IMR-90 (cell line): ENCODE measurements at regions of chr4 and their contacts with region 1.

Region 1: DNA sequence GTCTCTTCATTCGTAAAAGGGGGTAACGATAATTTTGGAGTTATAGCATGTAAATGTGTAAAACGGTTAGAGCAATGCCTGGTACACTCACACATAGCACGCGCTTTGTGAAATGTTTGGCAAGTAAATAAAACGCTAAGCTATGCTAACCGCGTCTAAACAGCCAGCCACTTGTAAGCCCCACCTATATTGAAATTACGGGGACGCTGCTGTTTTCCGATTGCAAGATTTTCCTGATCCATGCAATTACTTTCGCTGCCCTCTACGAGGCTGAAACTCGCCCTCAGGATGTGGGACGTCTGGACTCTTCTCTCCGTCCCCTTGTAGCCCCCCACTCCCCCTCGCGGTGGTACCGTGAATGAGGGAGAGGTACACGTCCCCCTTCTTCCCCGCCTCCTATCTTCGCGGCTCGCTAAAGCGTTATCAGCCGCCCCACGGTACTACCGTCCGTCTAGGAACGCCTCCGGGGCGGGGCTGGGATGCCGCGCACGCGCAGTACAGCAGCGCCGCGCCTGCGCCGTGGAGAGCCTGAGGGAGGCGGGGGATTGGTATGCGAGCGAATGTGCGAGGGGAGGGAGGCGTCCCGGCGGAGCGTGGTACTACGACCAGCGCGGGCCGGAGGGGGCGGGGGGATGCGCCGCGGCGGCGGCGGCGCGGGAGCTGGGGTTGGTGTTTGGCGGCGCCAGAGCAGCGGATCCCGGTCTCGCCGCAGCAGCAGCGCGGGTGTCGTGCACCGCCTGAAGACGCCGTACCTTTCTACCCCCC is at the start of gene STIM2:
- DNase-seq: peak; percentile 96
- ATAC-seq: peak; percentile 78
- H3K4me3 ChIP-seq: peak within 1 kb of the TSS; percentile 62
- H3K27ac ChIP-seq: peak within 1 kb of the TSS; percentile 62
- H3K4me1 ChIP-seq: peaks cover 8% of the 10 kb centered on the region; the same call in 1 of the 2 replicates
- H3K27me3 ChIP-seq: no peaks in the 10 kb centered on the region
- CTCF ChIP-seq: peak; percentile 44
- POLR2A ChIP-seq: peak; percentile 35; the same call in 1 of the 2 replicates
- RAD21 ChIP-seq: no peak
- total RNA-seq, gene STIM2: 24.2 and 27.6 TPM in 2 replicates

Region 2: GRCh38 chr4:26140150-26140898 is 720.0 kb before region 1 on chr4:
- CTCF ChIA-PET with region 1: no interaction called
- POLR2A ChIA-PET with region 1: no interaction called
- dilution Hi-C with region 1: no loop called
- in situ Hi-C with region 1: no loop called
- intact Hi-C with region 1: no loop called
- DNase-seq: peak; percentile 59
- ATAC-seq: peak; percentile 16; the same call in 1 of the 2 replicates
- H3K4me3 ChIP-seq: no peak overlapping the region
- H3K27ac ChIP-seq: peak overlapping the region; percentile 74; the same call in 1 of the 2 replicates
- H3K4me1 ChIP-seq: peaks cover 27% of the 10 kb centered on the region
- H3K27me3 ChIP-seq: no peaks in the 10 kb centered on the region
- CTCF ChIP-seq: no peak
- POLR2A ChIP-seq: no peak
- RAD21 ChIP-seq: no peak

Region 3: DNA sequence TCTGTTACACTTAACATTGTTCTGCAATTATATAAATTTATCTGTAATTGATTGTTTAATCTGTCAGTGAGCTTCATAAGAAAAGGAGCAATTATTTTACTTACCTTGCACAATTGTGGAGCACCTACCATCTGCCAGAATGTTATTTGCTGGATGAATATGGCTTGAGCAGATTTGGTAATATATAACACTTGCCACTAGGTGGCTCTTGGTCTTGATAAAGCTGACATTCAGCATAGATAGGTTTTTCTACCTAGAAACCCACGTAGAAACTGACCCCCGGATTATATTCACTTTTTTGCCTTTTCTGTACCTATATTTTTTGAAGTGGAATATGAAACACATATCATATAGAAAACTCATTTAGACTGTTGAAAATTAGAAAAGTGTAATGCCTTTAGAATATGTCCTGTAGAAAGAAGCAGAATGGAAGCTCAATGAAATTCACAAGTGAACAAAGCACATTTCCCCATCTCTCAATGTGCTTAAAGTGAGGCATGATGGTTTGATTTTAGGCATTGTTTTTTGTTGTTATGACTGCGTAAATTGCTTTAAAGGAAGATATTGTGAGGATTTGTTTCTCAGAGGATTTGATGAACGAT is 530.1 kb before region 1 on chr4:
- CTCF ChIA-PET with region 1: no interaction called
- POLR2A ChIA-PET with region 1: no interaction called
- dilution Hi-C with region 1: no loop called
- in situ Hi-C with region 1: loop called (anchors 25 kb)
- intact Hi-C with region 1: loop called (anchors 10 kb)
- DNase-seq: peak; percentile 68
- ATAC-seq: no peak
- H3K4me3 ChIP-seq: no peak overlapping the region
- H3K27ac ChIP-seq: no peak overlapping the region
- H3K4me1 ChIP-seq: peaks cover 13% of the 10 kb centered on the region
- H3K27me3 ChIP-seq: no peaks in the 10 kb centered on the region
- CTCF ChIP-seq: peak; percentile 61
- POLR2A ChIP-seq: no peak
- RAD21 ChIP-seq: peak; percentile 67

Region 4: DNA sequence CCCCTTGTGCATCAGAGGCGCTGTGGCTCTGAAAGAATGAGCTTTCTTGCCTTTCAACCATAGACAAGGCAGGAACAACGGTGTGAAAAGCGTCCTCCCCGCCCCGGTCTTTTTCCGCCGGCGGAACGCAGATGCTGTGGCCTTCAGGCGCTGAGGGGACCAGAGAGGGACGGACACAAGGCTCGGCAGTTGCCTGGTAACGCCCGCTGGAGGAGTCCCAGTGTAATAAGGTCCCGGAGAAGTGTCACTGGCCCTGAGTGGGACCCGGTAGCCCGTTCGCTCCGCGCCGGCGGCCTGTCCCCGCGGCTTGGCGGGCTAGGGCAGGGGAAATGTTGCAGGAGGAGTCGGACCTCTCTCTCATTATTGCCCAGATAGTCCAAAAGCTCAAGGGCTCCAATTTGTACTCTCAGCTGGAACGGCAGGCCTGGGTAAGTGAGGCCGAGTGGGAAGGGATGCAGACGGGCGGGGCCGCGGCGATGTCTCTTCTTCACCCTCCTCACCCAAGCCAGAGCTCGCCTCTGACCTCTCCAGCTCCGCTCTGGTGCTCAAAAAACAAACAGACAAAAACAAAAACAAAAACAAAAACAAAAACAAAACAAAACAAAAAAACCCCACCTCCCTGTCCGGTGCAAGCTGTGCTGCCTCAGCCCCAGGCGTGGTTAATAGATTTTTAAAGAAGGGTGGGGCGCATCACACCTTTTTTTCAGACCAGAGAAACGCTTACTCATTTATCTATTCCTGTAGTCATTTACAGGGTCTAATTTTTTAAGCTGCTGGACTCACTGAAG is 276.3 kb before region 1 on chr4 and contains the start of gene TBC1D19:
- CTCF ChIA-PET with region 1: no interaction called
- POLR2A ChIA-PET with region 1: no interaction called
- dilution Hi-C with region 1: no loop called
- in situ Hi-C with region 1: no loop called
- intact Hi-C with region 1: loop called (anchors 5 kb)
- DNase-seq: peak; percentile 85
- ATAC-seq: peak; percentile 99
- H3K4me3 ChIP-seq: peak within 1 kb of the TSS; percentile 76
- H3K27ac ChIP-seq: peak within 1 kb of the TSS; percentile 69
- H3K4me1 ChIP-seq: no peaks in the 10 kb centered on the region
- H3K27me3 ChIP-seq: no peaks in the 10 kb centered on the region
- CTCF ChIP-seq: peak; percentile 4; the same call in 1 of the 2 replicates
- POLR2A ChIP-seq: no peak
- RAD21 ChIP-seq: peak; percentile 33
- total RNA-seq, gene TBC1D19: 17.6 and 31.4 TPM in 2 replicates

Region 5: GRCh38 chr4:26931966-26932365 is 71.6 kb after region 1 on chr4:
- CTCF ChIA-PET with region 1: no interaction called
- POLR2A ChIA-PET with region 1: no interaction called
- dilution Hi-C with region 1: no loop called
- in situ Hi-C with region 1: no loop called
- intact Hi-C with region 1: no loop called
- DNase-seq: no peak
- ATAC-seq: no peak
- H3K4me3 ChIP-seq: no peak overlapping the region
- H3K27ac ChIP-seq: no peak overlapping the region
- H3K4me1 ChIP-seq: peaks cover 4% of the 10 kb centered on the region; the same call in 1 of the 2 replicates
- H3K27me3 ChIP-seq: no peaks in the 10 kb centered on the region
- CTCF ChIP-seq: no peak
- POLR2A ChIP-seq: no peak
- RAD21 ChIP-seq: no peak

Region 6: GRCh38 chr4:27003642-27004113 is 143.3 kb after region 1 on chr4:
- CTCF ChIA-PET with region 1: interaction called, 4 read pairs
- POLR2A ChIA-PET with region 1: no interaction called
- dilution Hi-C with region 1: no loop called
- in situ Hi-C with region 1: no loop called
- intact Hi-C with region 1: loop called (anchors 1 kb)
- DNase-seq: peak; percentile 59
- ATAC-seq: peak; percentile 58
- H3K4me3 ChIP-seq: no peak overlapping the region
- H3K27ac ChIP-seq: no peak overlapping the region
- H3K4me1 ChIP-seq: peaks cover 6% of the 10 kb centered on the region
- H3K27me3 ChIP-seq: no peaks in the 10 kb centered on the region
- CTCF ChIP-seq: no peak
- POLR2A ChIP-seq: no peak
- RAD21 ChIP-seq: no peak